ENCODE measurements at regions of chr6 and their contacts with region 1.

Region 1: DNA sequence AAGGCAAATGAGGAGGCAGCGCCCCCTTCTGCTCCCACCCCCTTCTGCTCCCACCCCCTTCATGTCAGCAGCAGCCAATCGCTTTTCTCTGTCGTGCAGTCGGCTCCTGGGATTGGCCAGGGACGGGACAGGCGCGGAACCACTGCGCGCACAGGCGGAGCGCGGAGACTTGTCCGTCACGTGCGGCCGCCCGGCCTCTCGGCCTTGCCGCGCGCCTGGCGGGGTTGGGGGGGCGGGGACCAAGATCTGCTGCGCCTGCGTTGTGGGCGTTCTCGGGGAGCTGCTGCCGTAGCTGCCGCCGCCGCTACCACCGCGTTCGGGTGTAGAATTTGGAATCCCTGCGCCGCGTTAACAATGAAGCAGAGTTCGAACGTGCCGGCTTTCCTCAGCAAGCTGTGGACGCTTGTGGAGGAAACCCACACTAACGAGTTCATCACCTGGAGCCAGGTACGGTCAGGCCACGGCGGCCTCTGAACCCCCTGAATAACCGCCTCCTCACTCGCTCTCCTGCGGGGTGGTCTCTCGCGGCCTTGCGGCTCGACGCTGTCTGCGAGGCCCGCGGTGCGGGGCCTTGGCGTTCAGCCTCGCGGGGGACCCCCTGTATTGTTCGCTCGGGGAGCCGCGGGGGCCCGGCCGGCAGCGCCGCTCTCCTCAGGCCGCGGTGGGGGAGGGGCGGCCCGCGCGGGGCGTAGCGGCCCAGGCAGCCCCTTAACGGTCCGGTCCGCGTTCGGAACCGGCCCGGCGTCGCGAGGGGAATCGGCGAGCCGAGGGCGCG is at the start of gene HSF2:
- DNase-seq: peak; percentile 98 to 99 (median 99)
- H3K4me3 ChIP-seq: peak within 1 kb of the TSS; percentile 72 to 100 (median 94)
- H3K27ac ChIP-seq: peak within 1 kb of the TSS; percentile 66 to 87
- H3K4me1 ChIP-seq: peaks cover 5 to 21% (median 11%) of the 10 kb centered on the region in 4 experiments
- H3K27me3 ChIP-seq: no peaks in the 10 kb centered on the region

Region 2: DNA sequence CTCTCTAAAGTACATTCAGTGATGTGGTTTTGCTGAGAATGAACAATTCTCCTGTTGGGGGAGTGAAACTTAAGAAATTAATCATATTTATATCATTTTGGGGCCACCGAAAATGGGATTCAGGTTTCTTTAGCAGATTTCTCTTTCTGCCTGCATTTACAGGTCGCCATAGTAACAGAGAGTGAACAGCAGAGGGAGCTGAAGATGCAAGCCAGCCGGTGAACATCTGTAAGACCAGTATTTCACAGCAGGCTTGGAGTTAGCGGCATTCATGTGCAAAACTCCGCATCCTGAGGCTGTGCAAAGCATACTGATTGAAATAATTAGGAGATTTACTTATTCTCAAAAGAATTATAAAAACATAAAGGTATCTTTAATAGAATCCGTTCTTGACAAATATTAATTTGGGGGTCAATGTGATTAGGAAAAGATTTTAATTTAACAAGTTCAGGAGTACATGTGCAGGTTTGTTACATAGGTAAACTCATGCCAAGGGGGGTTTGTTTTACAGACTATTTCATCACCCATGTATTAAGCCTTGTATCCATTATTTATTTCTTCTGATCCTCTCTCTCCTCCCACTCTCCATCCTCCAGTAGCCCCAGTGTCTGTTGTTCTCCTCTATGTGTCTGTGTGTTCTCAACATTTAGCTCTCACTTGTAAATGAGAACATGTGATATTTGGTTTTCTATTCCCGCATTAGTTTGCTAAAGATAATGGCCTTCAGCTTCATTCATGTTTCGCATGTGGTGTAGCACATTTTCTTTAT is 17.9 kb before region 1 on chr6:
- CTCF ChIA-PET with region 1: interaction called, 10 read pairs
- POLR2A ChIA-PET with region 1: no interaction called
- DNase-seq: peak; percentile 72 to 88 (median 87)
- H3K4me3 ChIP-seq: no peak overlapping the region
- H3K27ac ChIP-seq: no peak overlapping the region
- H3K4me1 ChIP-seq: no peaks in the 10 kb centered on the region
- H3K27me3 ChIP-seq: peaks cover 0 to 3% (median 0%) of the 10 kb centered on the region in 5 experiments

Region 3: DNA sequence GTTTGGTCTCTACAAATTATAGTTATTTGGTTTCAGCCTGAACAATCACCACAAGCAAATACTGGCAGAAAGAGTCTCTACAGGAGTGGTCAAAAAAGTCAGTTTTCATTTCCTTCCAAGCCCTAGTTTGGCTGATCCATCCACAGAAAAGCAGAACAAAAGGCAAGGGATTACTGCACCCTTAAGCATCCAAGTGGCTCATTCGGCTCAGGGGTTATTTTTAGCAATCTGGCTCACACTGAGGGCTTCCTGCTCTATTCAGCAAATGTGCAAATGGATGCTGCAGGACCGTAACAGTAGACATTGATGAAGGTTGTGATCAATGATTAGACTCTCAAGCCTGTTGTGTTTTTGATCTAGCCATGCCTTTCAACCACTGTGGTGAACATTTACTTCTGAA is 317.8 kb after region 1 on chr6:
- CTCF ChIA-PET with region 1: no interaction called
- POLR2A ChIA-PET with region 1: no interaction called
- DNase-seq: peak in 2 of 3 donors; percentile 46 to 58
- H3K4me3 ChIP-seq: peak overlapping the region in 1 of 7 experiments; percentile 16
- H3K27ac ChIP-seq: no peak overlapping the region
- H3K4me1 ChIP-seq: peaks cover 0 to 46% (median 9%) of the 10 kb centered on the region in 4 experiments
- H3K27me3 ChIP-seq: no peaks in the 10 kb centered on the region

Measured in common myeloid progenitor, CD34-positive (primary cell).